T-cell (primary cell): ENCODE measurements at regions of chr21 and their contacts with region 1.

Region 1: DNA sequence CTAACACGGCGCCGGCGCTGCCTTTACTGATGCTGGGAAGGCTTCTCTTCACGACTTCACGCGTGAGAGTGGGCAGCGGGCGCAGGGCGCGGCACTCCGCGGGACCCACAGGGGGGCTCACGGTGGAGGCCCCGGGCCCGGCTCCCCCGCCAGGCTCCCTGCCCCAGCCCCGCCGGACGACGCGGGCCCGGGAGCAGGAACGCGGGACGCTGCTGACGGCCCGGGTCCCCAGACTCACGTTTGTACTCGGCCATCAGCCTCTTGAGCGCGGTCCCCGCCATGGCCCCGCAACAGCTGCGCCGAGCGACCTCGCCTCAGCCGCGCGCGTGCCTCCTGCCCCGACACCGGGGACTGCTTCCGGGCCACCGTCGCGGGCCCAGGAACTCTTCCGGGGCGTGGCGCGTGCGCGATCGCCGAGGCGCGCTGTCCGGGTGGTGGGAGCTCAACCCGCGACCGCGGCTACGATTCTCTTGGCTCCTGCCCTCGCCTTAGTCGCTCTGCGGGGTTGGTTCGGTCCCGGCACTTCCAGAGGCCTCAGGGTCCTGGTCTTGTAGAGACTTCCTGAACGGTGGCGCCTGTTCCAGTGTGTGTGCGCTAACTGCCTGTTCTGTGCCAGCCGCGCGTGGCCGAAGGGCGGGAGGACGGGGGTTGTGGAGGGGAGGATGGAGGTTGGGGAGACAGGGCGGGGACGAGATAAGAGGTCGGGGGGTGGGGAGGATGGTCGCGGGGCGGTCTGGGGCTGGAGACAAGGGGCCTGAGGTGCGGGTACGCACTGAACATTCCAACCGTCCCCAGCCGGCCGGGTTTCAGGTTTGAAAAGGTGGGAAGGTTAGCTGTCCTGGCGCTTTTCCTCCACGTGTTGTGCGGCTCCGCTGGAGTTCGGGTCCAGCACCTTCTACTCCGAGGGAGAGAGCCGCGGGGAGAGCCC is at the start of gene UBE2G2:
- DNase-seq: peak; percentile 67 to 91 (median 82)
- ATAC-seq: peak; percentile 93 to 96 (median 94)
- H3K4me3 ChIP-seq: peak within 1 kb of the TSS; percentile 74 to 84
- H3K4me3 Mint-ChIP-seq: peak within 1 kb of the TSS; percentile 92 to 98 (median 97)
- H3K27ac ChIP-seq: peak within 1 kb of the TSS; percentile 62
- H3K27ac Mint-ChIP-seq: peak within 1 kb of the TSS; percentile 89 to 97
- H3K4me1 ChIP-seq: peaks cover 11 to 27% of the 10 kb centered on the region in 2 experiments
- H3K4me1 Mint-ChIP-seq: peaks cover 42 to 47% (median 46%) of the 10 kb centered on the region in 3 donors
- H3K27me3 ChIP-seq: no peaks in the 10 kb centered on the region
- H3K27me3 Mint-ChIP-seq: no peaks in the 10 kb centered on the region
- total RNA-seq, gene UBE2G2: 124 to 157 (median 134) TPM

Region 2: DNA sequence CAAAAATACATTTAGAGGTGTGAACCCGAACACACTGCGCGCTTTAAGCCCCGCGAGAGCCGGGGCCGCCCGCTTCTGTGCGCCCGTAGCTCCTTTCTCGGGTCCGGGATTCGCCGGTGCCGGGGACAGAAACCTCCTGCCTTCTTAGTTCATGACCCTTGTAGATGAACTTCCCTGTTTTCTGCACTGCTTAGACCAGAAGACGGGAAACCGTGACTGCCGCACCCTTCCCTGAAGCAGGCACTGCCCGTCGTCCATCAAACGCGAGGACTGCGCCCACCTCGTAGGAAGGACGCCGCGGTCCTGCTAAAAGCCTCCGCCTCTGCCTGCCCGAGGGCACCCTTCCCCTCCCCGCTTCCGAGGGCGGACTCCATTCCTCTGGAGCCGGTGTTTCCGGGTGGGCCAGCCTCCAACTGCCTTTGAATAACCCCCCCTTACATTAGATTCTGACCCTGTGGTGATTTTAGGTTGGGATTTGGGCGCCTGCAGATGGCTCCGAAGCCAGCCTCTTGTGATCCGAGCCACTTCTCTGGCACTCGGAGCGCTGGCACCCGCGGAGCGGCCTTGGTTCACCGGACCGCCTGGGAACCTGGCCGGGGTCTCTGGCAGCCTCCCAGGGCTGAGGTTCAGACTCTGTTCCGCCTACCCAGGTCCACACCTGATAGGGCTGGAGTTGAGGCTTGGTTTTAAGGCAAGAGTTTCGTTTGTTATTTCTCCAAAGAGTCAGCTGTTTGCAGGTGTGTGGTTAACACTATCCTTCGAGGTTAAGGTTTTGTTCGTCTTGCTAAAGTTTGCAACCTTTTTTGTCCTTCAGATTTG is 73.0 kb after region 1 on chr21:
- CTCF ChIA-PET with region 1: interaction called in 1 of 2 experiments, 12 read pairs
- POLR2A ChIA-PET with region 1: no interaction called
- DNase-seq: peak in 17 of 35 experiments; percentile 6 to 63 (median 33)
- ATAC-seq: peak; percentile 0 to 5 (median 2)
- H3K4me3 ChIP-seq: peak overlapping the region; percentile 65 to 85
- H3K4me3 Mint-ChIP-seq: peak overlapping the region; percentile 87 to 94 (median 88)
- H3K27ac ChIP-seq: peak overlapping the region; percentile 78
- H3K27ac Mint-ChIP-seq: peak overlapping the region; percentile 91 to 94
- H3K4me1 ChIP-seq: peaks cover 37 to 48% of the 10 kb centered on the region in 2 experiments
- H3K4me1 Mint-ChIP-seq: peaks cover 41 to 49% (median 46%) of the 10 kb centered on the region in 3 donors
- H3K27me3 ChIP-seq: no peaks in the 10 kb centered on the region
- H3K27me3 Mint-ChIP-seq: no peaks in the 10 kb centered on the region

Region 3: GRCh38 chr21:45029298-45029947 is 227.7 kb after region 1 on chr21:
- CTCF ChIA-PET with region 1: no interaction called
- POLR2A ChIA-PET with region 1: no interaction called
- DNase-seq: peak in 1 of 35 experiments; percentile 19
- ATAC-seq: no peak
- H3K4me3 ChIP-seq: no peak overlapping the region
- H3K4me3 Mint-ChIP-seq: no peak overlapping the region
- H3K27ac ChIP-seq: no peak overlapping the region
- H3K27ac Mint-ChIP-seq: no peak overlapping the region
- H3K4me1 ChIP-seq: no peaks in the 10 kb centered on the region
- H3K4me1 Mint-ChIP-seq: peaks cover 0 to 5% (median 0%) of the 10 kb centered on the region in 3 donors
- H3K27me3 ChIP-seq: peaks cover 0 to 34% of the 10 kb centered on the region in 2 experiments
- H3K27me3 Mint-ChIP-seq: peaks cover 4 to 20% of the 10 kb centered on the region in 2 donors